ENCODE measurements at regions of chr12 and their contacts with region 1.

Region 1: GRCh38 chr12:53500776-53501614 is at the start of gene TARBP2:
- H3K4me3 ChIP-seq: peak within 1 kb of the TSS; percentile 67
- H3K27ac ChIP-seq: peak within 1 kb of the TSS; percentile 94
- H3K4me1 ChIP-seq: peaks cover 16% of the 10 kb centered on the region
- CTCF ChIP-seq: peak; percentile 70

Region 2: DNA sequence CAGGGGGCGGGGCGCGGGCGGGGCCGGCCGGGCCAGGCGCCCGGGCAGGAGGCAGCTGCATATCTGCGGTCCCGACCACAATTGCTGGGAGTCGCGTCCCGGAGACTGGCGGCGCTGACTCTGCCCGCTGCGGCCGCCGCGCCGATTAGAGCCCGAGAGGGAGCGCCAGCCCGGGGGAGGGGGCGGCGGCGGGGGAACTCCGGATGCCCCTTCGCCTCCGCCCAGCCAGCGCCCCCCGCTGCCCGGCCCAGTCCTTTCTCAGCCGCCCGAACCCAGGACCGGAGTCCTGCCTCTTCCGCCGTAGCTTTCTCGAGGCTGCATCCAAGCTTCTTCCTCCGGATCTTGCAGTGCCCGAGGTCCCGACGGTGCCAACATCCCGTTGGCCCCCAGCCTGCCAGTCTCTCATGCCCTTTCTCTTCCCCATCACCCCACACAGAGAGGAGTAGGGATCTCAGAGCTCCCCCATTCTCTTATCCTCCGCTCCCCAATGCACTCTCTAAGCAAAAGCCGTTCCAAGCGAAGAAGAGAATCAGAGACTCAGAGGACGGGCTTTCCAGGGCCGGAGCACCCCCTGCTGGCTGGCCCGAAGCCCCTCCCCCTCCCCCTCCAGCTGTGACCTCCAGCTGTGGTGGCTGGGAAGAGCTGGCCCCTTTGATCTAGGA is 156.0 kb before region 1 on chr12:
- CTCF ChIA-PET with region 1: no interaction called
- POLR2A ChIA-PET with region 1: interaction called, 20 read pairs
- H3K4me3 ChIP-seq: peak overlapping the region; percentile 62
- H3K27ac ChIP-seq: peak overlapping the region; percentile 21; the same call in 1 of the 2 replicates
- H3K4me1 ChIP-seq: no peaks in the 10 kb centered on the region
- CTCF ChIP-seq: peak; percentile 93

Region 3: DNA sequence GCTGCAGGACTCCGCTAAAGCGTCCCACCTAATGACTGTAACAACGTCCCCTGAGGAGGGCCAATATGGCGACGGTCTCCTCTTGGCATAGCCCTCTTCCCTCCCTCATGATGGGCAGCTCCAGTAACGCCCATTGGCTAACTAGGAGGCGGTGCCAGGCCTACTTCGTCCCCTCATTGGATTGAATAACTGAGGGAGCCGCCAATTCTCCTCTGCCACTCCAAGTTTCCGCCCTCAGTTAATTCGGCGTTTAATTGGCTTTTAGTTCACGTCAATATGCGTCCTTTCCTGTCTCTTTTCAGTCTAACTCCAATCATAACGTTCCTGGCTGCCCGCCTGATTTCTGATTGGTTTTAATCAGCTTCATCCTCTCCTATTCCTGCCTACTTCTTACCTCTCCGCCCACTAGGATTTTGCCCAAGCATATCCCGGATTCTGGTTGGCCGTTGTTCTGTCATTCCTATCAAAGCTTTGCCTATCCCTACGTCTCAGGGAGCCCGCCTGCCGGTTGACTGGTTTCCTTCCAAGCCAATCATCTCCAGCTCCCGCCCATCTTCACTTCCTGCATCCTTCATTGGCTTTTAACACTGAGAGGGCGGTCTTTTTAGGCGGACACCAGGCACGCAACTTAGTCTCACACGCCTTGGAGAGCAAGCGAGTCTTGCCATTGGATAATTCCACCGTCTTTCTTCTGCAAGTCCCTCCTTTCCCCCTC is 121.4 kb before region 1 on chr12:
- CTCF ChIA-PET with region 1: no interaction called
- POLR2A ChIA-PET with region 1: interaction called, 20 read pairs
- H3K4me3 ChIP-seq: peak overlapping the region; percentile 70
- H3K27ac ChIP-seq: peak overlapping the region; percentile 95
- H3K4me1 ChIP-seq: peaks cover 17% of the 10 kb centered on the region
- CTCF ChIP-seq: no peak

Region 4: GRCh38 chr12:53441040-53441833 is 59.8 kb before region 1 on chr12 and contains the start of gene PRR13:
- CTCF ChIA-PET with region 1: no interaction called
- POLR2A ChIA-PET with region 1: interaction called, 15 read pairs
- H3K4me3 ChIP-seq: peak within 1 kb of the TSS; percentile 61
- H3K27ac ChIP-seq: peak within 1 kb of the TSS; percentile 79
- H3K4me1 ChIP-seq: 0 out of 2 replicates have a peak, but pooled peaks cover 2% of the 10 kb centered on the region
- CTCF ChIP-seq: no peak

Region 5: GRCh38 chr12:53476769-53477209 is 24.2 kb before region 1 on chr12:
- CTCF ChIA-PET with region 1: interaction called, 4 read pairs
- POLR2A ChIA-PET with region 1: interaction called, 39 read pairs
- H3K4me3 ChIP-seq: no peak overlapping the region
- H3K27ac ChIP-seq: no peak overlapping the region
- H3K4me1 ChIP-seq: no peaks in the 10 kb centered on the region
- CTCF ChIP-seq: no peak

Region 6: DNA sequence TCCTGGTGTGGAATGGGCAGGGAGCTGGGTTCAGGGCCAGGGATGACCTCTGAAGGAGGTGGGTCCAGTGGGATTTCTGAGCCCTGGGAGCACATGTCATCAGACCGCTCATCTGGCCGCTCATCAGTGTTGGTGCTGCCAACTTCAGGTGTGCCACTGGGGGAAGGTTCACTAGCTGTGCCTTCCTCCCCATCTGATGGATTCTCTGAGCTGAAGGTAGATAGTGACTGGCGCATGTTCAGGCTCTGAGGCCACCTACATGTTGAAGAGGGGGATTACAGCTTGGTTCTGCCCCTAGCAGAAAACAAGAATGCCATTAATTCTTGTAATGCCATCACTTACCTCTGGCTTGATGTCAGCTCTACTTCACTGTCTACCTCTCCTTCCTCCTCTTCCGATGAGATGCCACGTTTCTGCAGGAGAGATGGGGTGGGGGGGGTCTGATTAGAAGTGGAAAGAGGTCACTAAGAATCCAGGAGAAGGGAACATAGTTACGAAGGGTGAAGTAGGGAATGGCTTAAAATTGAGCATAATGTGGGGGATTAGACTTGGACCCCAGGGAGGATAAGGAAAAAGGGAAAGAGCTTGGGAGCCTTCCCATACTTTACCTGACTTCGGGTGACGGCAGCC is 18.9 kb before region 1 on chr12:
- CTCF ChIA-PET with region 1: interaction called, 4 read pairs
- POLR2A ChIA-PET with region 1: interaction called, 39 read pairs
- H3K4me3 ChIP-seq: no peak overlapping the region
- H3K27ac ChIP-seq: no peak overlapping the region
- H3K4me1 ChIP-seq: no peaks in the 10 kb centered on the region
- CTCF ChIP-seq: no peak

Region 7: GRCh38 chr12:53524476-53524875 is 23.5 kb after region 1 on chr12:
- CTCF ChIA-PET with region 1: no interaction called
- POLR2A ChIA-PET with region 1: no interaction called
- H3K4me3 ChIP-seq: no peak overlapping the region
- H3K27ac ChIP-seq: no peak overlapping the region
- H3K4me1 ChIP-seq: no peaks in the 10 kb centered on the region
- CTCF ChIP-seq: no peak

Region 8: DNA sequence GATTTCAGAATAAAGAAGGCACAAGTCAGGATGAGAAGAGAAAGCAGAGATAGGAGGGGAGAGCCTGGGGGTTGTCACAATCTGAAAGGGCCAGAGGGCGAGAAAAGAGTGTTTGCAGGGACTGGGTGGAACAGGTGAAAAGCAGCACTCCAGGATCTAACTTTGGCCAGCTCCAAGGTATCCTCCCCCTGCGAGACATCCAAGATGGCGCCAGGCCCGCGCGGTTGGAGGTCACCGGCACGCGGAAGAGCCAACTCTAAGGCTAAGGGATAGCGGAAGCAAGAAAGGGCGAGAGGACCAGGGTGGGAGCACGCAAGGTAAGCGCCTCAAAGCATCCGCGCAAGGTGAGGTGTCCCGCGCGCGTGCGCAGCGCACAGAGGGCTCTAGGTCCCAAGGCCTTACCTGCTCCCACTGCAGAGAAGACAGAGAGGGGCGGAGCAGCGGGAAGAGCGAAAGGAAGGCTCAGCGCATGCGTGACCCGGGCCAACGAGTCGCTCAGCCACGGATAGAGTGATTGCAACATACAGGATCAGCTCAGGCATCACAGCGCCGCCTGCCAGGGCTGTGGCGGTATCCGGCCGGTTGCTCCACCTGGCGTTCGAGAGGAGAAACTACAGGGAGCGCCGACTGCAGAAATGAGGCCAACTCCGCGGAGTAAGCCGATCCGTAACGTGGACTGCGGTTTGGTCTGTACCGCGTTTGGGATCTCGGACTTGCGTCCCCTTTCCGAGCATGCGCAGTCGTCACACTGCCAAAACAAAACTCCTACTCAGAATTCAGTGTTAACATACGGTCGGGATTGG is 174.9 kb after region 1 on chr12 and contains the start of gene ATP5MC2:
- CTCF ChIA-PET with region 1: no interaction called
- POLR2A ChIA-PET with region 1: interaction called, 13 read pairs
- H3K4me3 ChIP-seq: peak within 1 kb of the TSS; percentile 68
- H3K27ac ChIP-seq: peak within 1 kb of the TSS; percentile 90
- H3K4me1 ChIP-seq: 0 out of 2 replicates have a peak, but pooled peaks cover 7% of the 10 kb centered on the region
- CTCF ChIP-seq: peak; percentile 100

Measured in HEK293 (cell line).